AG04449 (cell line): ENCODE measurements at regions of chr1 and their contacts with region 1.

Region 1: GRCh38 chr1:153485863-153486262 is 25.4 kb upstream of the S100A7 start:
- DNase-seq: no peak
- H3K4me3 ChIP-seq: no peak overlapping the region
- CTCF ChIP-seq: no peak

Region 2: GRCh38 chr1:153141377-153141776 is 344.5 kb before region 1 on chr1:
- CTCF ChIA-PET with region 1: no interaction called
- POLR2A ChIA-PET with region 1: no interaction called
- DNase-seq: no peak
- H3K4me3 ChIP-seq: no peak overlapping the region
- CTCF ChIP-seq: no peak

Region 3: GRCh38 chr1:153465811-153466636 is 19.8 kb before region 1 on chr1:
- CTCF ChIA-PET with region 1: interaction called, 14 read pairs
- POLR2A ChIA-PET with region 1: no interaction called
- DNase-seq: no peak
- H3K4me3 ChIP-seq: no peak overlapping the region
- CTCF ChIP-seq: peak; percentile 76

Region 4: DNA sequence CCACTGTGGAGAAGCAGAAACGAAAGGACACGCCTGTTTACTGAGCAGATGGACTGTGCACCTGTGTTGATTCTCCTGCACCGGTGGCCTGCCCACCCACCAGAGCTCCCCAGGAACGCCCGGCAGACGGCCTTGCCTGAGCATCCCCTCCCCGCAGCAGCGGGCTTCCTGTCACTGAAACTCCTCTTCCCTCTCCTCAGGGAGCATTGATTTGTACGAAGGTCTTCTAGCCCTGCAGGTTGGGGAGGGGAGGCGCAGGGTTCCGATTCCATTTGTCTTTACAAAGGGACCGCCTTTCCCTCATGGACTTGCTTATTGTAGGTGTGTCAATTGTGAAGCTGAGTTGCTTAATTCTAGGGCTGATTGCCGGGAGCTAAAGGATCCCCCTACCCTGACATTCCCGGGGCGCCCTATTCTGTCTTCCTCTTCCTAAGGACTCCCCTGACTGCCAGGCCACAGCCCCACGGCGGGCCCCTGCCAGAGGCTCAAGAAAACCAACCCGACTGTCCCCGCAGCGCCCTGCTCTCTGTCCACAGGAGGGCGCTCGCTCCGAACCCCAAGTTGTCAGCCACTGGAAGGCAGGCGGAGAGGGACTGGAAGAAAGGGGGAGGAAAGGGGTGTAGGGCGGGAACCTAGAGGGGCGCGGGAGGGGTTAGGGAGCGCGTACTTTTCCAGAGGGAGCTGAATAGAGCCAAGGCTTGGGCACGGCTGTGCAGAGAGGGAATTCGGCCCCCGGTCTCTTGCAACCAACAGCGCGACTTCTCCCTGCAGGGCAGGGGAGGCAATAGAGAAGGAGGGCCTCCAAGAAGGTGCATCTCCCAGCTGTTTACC is 47.1 kb after region 1 on chr1:
- CTCF ChIA-PET with region 1: no interaction called
- POLR2A ChIA-PET with region 1: no interaction called
- DNase-seq: no peak
- H3K4me3 ChIP-seq: peak overlapping the region; percentile 99
- CTCF ChIP-seq: peak; percentile 99